ENCODE measurements at regions of chr3 and their contacts with region 1.

Region 1: DNA sequence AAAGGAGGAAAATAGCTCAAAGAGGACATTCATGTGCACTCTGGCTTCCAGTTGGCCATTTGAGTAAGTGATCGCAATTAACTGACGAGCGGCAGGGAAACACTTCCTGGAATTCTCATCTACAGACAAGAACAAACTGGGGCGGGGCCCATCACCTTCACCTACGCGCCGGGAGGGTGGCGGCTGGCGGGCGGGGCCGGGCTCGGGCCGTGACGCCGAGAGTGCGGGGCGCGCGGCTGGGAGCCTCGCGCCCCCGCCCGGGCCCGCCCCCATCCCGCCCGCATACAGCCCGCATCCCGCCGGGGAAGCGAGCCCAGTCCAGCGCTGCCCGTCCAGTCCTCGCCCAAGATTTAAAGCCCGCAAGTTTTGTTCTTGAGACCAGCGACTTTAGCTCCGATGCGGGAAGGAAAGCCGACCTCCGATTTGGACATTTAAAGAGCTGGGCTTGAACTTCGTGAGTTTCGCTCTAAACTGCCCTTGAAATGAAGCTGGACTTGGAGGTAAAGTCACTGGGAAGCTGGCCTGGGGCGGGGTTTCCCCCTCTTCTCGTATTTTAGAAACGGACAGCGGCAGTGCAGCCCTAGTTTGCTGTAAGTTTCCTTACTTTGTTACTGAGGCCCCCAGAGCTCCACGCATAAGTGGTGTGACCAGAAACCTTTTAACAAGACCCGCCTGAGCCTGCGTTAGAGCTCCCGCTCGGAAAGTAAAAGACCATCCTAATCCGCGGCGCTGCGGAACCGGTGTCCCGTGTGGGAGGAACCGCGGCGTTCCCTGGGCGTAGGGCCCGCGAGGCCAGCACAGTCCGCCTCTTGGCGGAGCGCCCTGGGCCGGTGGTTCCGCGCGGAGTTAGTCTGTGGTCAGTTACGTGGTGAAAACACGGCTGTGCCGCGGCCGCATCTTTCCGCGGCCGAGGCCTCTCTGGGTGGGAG is at the start of gene B3GNT5:
- DNase-seq: peak; percentile 64 to 86 (median 74)
- ATAC-seq: peak; percentile 65
- H3K4me3 ChIP-seq: peak within 1 kb of the TSS; percentile 52
- H3K27ac ChIP-seq: peak within 1 kb of the TSS; percentile 83
- H3K4me1 ChIP-seq: peaks cover 11 to 18% of the 10 kb centered on the region in 2 experiments; a peak in 4 of 5 replicates
- H3K27me3 ChIP-seq: no peaks in the 10 kb centered on the region
- CTCF ChIP-seq: no peak
- EP300 ChIP-seq: 0 out of 2 replicates have a peak, but pooled peaks have one; percentile 12
- POLR2A ChIP-seq: peak; percentile 57; the same call in 1 of the 2 replicates
- RAD21 ChIP-seq: no peak
- polyA plus RNA-seq, gene B3GNT5: 13.6 to 13.8 TPM

Region 2: GRCh38 chr3:183265834-183266417 is 12.7 kb after region 1 on chr3:
- CTCF ChIA-PET with region 1: no interaction called
- POLR2A ChIA-PET with region 1: interaction called, 13 read pairs
- in situ Hi-C with region 1: no loop called
- intact Hi-C with region 1: no loop called
- DNase-seq: no peak
- ATAC-seq: no peak
- H3K4me3 ChIP-seq: no peak overlapping the region
- H3K27ac ChIP-seq: no peak overlapping the region
- H3K4me1 ChIP-seq: peaks cover 0 to 13% of the 10 kb centered on the region in 2 experiments; a peak in 4 of 5 replicates
- H3K27me3 ChIP-seq: no peaks in the 10 kb centered on the region
- CTCF ChIP-seq: no peak
- EP300 ChIP-seq: no peak
- POLR2A ChIP-seq: no peak
- RAD21 ChIP-seq: no peak

Region 3: DNA sequence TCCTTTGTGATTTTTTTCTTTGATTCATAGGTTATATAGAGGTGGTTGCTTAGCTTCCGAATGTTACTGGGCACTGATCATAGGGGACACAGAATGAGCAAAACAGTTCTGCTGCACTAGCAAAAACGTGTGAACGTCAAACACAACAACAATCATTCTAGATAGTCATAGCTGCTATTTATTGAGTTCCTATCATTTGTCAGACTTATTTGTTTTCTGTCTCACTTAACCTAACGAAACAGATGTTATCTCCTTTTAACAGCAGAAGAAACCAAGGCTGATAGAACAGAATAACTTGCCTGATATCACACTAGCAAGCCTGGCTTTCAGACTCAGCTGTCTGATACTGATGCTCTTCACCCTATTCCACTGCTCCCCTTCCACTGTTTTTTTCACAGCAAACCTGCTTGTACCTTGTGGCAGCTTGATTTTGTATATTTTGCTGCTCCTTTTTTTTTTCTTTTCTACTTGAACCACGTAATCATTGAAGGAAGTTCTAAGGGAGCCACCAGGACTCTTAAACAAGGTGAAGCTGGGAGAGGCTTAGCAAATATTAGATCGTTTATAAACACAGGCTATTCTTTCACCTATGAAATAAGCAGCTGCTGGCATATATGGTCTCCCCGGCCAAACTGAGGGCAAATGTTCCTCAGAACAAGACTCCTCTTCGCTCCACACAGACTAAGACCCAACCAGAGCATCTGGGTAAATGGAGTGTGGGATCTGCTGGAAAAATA is 96.4 kb after region 1 on chr3:
- CTCF ChIA-PET with region 1: no interaction called
- POLR2A ChIA-PET with region 1: interaction called, 3 read pairs
- in situ Hi-C with region 1: no loop called
- intact Hi-C with region 1: loop called (anchors 10 kb)
- DNase-seq: peak in 1 of 4 experiments; percentile 37
- ATAC-seq: peak; percentile 64
- H3K4me3 ChIP-seq: no peak overlapping the region
- H3K27ac ChIP-seq: peak overlapping the region; percentile 17; the same call in 1 of the 3 replicates
- H3K4me1 ChIP-seq: peaks cover 14 to 22% of the 10 kb centered on the region in 2 experiments
- H3K27me3 ChIP-seq: no peaks in the 10 kb centered on the region
- CTCF ChIP-seq: no peak
- EP300 ChIP-seq: peak; percentile 61
- POLR2A ChIP-seq: no peak
- RAD21 ChIP-seq: no peak; a peak in 1 of 4 replicates

Region 4: GRCh38 chr3:183377307-183377959 is 124.2 kb after region 1 on chr3:
- CTCF ChIA-PET with region 1: no interaction called
- POLR2A ChIA-PET with region 1: no interaction called
- in situ Hi-C with region 1: no loop called
- intact Hi-C with region 1: loop called (anchors 2 kb)
- DNase-seq: no peak
- ATAC-seq: no peak
- H3K4me3 ChIP-seq: no peak overlapping the region
- H3K27ac ChIP-seq: no peak overlapping the region
- H3K4me1 ChIP-seq: peaks cover 4 to 14% of the 10 kb centered on the region in 2 experiments
- H3K27me3 ChIP-seq: no peaks in the 10 kb centered on the region
- CTCF ChIP-seq: no peak
- EP300 ChIP-seq: no peak
- POLR2A ChIP-seq: no peak
- RAD21 ChIP-seq: no peak